ENCODE measurements at regions of chr17 and their contacts with region 1.

Region 1: GRCh38 chr17:50087246-50087911 is 7.8 kb upstream of the PDK2 start:
- DNase-seq: peak; percentile 79 to 88
- H3K4me3 ChIP-seq: no peak overlapping the region
- H3K27ac ChIP-seq: no peak overlapping the region
- H3K4me1 ChIP-seq: no peaks in the 10 kb centered on the region
- H3K27me3 ChIP-seq: no peaks in the 10 kb centered on the region
- CTCF ChIP-seq: peak in 6 of 7 experiments; percentile 13 to 98 (median 95)
- EP300 ChIP-seq: no peak
- POLR2A ChIP-seq: no peak

Region 2: GRCh38 chr17:50026901-50027630 is 60.3 kb before region 1 on chr17:
- intact Hi-C with region 1: loop called (anchors 2 kb)
- DNase-seq: peak; percentile 90 to 93
- H3K4me3 ChIP-seq: peak overlapping the region; percentile 22 to 34 (median 28)
- H3K27ac ChIP-seq: peak overlapping the region in 4 of 5 donors; percentile 35 to 79 (median 72)
- H3K4me1 ChIP-seq: peaks cover 15 to 28% (median 20%) of the 10 kb centered on the region in 4 donors
- H3K27me3 ChIP-seq: peaks cover 0 to 20% (median 0%) of the 10 kb centered on the region in 3 donors
- CTCF ChIP-seq: peak in 6 of 7 experiments; percentile 33 to 98 (median 97)
- EP300 ChIP-seq: no peak
- POLR2A ChIP-seq: no peak

Region 3: DNA sequence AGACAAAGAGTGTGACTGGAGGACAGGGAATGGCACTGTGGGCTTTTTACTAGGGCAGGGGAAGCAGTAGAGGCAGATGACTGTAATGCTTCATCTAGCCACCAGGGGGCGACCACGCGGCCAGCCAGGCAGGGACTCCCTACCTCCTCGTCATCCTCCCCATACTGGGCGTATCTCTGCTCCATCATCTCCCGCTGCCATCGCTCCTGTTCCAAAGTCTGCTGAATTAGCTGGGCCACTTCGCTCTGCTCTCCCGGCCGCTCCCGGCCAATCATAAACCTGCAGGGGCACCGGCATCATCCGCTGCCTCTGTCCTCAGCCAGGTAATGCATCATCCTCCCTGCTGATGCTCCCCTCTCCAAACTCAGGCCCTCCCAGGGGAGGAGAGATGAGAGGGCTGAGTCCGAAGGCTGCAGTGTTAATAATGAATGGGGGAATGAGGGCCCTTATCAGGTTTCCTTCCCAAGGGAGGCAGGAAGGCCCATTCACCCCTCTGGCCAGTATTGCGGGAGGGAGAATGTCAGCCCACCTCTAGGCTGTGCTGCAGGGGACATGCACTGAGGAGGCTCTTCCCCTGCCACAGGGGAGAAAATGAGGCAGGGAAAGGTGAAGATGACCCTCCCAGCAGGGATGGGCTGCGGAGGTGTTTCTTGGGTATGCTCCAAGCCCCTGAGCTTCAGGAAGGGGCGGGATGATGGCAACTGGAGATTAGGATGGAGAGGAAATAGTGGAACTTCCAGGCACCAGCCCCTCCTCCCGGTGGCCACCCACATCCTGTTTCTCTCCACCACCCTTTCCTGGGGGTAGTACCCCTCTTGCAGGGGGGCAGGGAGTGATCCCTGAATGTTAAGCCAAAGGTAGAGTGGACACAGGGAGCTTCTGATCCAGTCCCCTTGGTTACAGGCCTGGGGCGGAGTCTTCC is 52.8 kb after region 1 on chr17:
- intact Hi-C with region 1: no loop called
- DNase-seq: peak; percentile 81 to 90
- H3K4me3 ChIP-seq: no peak overlapping the region
- H3K27ac ChIP-seq: peak overlapping the region in 3 of 5 donors; percentile 16 to 60 (median 43)
- H3K4me1 ChIP-seq: peaks cover 9 to 51% (median 33%) of the 10 kb centered on the region in 4 donors
- H3K27me3 ChIP-seq: no peaks in the 10 kb centered on the region
- CTCF ChIP-seq: peak in 6 of 7 experiments; percentile 75 to 97 (median 96)
- EP300 ChIP-seq: no peak
- POLR2A ChIP-seq: no peak

Measured in stomach (tissue), 19 donors.